A549 (cell line): ENCODE measurements at regions of chr6 and their contacts with region 1.

Region 1: DNA sequence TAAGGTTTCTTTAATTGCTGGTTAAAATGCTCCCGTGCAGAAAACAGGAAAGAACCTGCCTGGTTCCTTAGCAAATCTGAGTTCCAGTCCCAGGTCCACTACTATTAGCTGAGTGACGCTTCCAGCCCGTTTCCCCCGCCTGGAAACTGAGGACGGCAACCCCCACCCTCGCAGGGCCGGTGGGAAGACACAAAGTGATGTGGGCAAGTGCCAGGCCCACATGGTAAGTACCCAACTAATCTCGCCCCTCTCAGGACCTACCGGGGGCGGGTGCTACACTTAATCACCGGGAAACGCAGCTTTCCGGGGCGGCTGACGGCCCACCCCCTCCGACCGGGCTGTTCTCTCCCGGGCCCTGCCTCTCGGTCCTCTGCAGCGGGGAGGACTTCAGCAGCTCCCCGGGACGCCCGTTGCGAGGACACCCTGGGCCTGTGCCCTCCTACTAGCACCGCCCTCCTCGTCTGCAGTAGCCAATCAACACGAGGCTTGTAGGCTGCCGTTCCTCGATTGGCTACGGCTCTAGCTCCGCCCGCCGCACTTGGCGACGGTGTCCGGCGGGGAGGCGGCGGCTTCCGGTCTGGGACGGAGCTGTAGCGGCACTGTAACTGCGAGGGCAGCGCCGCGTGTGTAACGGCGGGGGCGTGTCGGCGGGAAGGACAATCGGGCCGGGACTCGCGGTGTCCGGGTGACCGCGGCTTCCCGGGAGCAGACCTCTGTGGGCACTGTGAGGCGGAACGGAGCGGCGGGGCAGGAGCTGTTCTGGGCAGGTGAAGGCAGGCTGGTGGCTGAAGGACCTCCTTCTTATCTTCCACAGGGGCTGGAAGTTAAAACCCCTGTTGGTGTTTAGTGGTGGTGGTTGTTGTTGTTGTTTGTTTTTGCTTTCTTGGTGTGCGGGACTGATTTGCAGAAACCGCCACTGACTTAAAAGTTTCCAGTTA is at the start of gene ZBTB9:
- DNase-seq: peak; percentile 93 to 95
- ATAC-seq: peak; percentile 98 to 100
- H3K4me3 ChIP-seq: peak within 1 kb of the TSS; percentile 97
- H3K27ac ChIP-seq: peak within 1 kb of the TSS; percentile 93 to 95
- H3K4me1 ChIP-seq: peaks cover 10% of the 10 kb centered on the region; the same call in 2 of the 3 replicates
- CTCF ChIP-seq: no peak
- EP300 ChIP-seq: no peak
- POLR2A ChIP-seq: peak; percentile 71
- RAD21 ChIP-seq: no peak
- polyA plus RNA-seq, gene ZBTB9: 6.9 and 9.5 TPM in 2 replicates

Region 2: DNA sequence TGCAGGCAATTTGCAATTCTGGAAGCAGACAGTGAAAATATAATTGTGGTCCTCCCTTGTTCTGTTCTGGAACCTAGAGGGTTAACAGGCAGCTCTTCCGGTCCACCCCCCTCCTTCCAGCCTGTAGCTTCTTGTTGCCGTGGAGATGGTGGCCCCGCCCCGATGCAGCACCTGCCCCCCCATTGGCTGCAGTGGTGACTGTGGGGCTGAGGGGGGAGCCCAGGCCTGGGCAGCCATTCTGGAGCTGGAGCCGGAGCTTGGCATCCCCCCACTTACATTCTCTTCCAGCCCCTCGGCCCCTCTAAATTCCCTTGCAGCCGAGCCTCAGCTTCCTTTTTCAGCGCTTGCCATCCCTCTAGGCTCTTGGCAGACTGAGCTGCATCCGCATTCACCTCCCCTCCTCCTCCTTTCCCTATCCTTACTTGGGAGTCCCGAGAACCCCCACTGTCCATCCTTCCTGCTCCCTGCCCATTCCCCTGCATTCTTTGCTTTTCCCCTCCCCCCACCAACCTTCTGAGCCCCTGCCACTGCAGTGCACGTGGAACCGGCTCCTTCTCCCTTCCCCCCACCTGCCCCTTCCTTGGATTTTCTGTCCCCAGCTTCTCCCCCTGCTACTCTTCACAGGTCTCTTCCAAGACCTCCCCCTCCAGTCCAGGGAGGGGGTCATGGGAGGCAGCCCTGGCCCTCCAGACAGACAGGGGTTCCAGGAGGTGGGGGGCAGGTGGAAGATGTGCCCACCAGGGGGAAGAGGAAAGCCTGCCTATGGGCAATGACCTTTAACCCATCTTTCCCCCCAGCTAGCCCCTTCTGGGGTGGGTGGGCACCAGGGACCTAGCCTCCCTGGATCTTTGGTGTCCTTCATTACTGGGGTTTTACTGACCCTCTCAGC is 23.0 kb before region 1 on chr6:
- CTCF ChIA-PET with region 1: interaction called, 12 read pairs
- POLR2A ChIA-PET with region 1: interaction called, 11 read pairs
- DNase-seq: peak; percentile 62 to 81
- ATAC-seq: peak in 1 of 2 experiments; percentile 71; a peak in 3 of 6 replicates
- H3K4me3 ChIP-seq: peak overlapping the region; percentile 12; the same call in 2 of the 3 replicates
- H3K27ac ChIP-seq: peak overlapping the region; percentile 38 to 80; a peak in 4 of 6 replicates
- H3K4me1 ChIP-seq: peaks cover 39% of the 10 kb centered on the region
- CTCF ChIP-seq: no peak
- EP300 ChIP-seq: no peak
- POLR2A ChIP-seq: no peak
- RAD21 ChIP-seq: no peak